ENCODE measurements at regions of chr9 and their contacts with region 1.

Region 1: DNA sequence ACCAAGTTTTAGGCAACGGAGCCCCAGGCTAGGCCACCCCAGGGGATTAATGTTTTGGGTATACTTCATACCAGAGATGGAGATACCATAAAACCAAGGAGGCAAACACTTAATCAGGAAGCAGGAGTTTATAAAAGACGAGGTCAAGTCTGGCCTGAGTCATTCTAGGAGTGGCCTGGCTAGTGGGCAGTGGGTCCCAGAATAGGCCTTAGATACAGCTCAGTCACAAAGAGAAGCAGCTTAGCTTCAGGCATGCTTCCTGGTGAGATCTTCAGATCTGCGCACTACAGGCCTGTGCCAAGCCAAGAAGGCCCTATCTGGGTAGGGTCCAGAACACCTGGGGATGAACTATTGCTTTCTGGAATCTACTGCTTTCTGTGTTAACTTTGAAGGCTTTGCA is 20.6 kb upstream of the NR5A1 start:
- ATAC-seq: peak in 3 of 8 experiments; percentile 38 to 64 (median 49)
- H3K4me3 ChIP-seq: no peak overlapping the region
- H3K27ac ChIP-seq: no peak overlapping the region
- H3K4me1 ChIP-seq: no peaks in the 10 kb centered on the region

Region 2: DNA sequence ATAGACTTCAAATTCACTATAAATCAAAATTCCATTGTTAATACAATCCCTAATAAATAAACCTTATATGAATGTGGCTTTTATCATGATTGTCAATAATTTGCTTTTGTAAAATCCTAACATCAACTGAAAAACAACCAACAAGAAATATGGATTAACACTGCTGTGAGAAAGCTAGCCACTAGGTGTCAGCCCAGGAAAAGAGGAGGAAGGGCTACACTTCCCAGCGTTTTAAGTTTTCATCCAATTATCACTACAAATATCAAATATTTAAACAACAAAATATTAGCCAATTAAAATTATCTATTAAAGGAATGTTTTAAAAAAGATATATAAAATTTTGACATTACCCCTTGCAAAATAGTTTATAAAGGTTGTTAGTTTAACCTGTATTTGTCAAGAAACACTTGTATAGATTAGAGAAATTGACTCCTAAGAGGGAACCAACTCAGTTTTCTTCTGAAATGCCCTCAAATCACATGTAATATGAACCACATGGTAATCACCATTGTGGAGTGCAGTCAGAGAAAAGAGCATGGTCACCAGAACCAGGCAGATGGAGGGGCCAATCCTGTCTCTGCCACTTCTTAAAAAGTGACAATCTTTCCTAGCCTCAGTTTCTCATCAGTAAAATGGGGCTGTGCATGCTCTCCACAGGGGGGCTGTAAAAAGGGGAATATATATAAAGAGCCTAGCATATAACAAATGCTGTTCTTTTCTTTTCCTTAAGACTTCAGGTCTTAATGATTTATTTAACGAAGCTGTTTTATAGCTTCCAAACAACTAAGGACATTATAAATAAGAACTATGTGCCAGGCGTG is 983.6 kb before region 1 on chr9:
- in situ Hi-C with region 1: loop called in 1 of 9 experiments (anchors 25 kb)
- ATAC-seq: peak in 3 of 8 experiments; percentile 23 to 41 (median 37)
- H3K4me3 ChIP-seq: no peak overlapping the region
- H3K27ac ChIP-seq: no peak overlapping the region
- H3K4me1 ChIP-seq: peaks cover 12 to 16% of the 10 kb centered on the region in 2 donors

Region 3: GRCh38 chr9:123637945-123638634 is 889.7 kb before region 1 on chr9:
- in situ Hi-C with region 1: no loop called
- ATAC-seq: peak in 2 of 8 experiments; percentile 13 to 46
- H3K4me3 ChIP-seq: no peak overlapping the region
- H3K27ac ChIP-seq: no peak overlapping the region
- H3K4me1 ChIP-seq: peaks cover 0 to 5% of the 10 kb centered on the region in 2 donors

Region 4: DNA sequence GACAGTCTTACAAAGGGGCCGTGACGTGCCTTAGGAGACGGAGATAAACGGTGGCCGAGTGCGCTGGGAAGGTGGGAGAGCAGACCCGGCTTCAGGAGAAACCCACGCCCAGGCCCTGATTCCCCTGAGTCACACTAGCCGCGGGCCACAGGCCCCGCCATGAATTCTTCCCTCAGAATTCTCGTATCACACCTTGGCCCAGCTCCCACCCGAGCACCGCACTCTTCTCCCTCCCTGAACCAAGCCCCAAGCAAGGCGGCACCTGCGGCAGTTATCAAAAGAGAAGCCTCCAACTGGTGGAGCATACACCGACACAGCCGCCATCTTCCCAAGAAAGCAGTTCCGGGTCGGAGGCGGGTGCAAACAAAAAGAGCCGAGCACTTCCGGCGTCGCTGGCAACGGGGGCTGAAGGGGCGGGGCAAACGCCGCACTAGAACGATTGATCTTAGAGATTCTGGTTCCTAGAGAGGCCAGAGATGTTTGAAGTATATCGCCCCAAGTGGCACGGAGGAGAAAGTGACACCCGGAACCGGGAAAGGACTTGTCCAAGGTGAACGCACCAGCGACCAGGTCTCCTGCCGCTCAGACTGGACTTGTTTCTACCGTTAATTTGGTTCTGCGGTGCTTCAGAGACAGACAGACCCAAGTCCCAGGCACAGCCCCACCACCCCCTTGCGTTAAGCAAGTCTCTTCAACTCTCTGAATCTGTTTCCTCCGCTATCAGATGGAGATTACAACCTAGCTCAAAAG is 112.5 kb before region 1 on chr9 and contains the start of gene PSMB7:
- in situ Hi-C with region 1: loop called in 5 of 9 experiments (anchors 10 to 25 kb)
- ATAC-seq: peak; percentile 85 to 94 (median 90)
- H3K4me3 ChIP-seq: peak within 1 kb of the TSS; percentile 56 to 98 (median 67)
- H3K27ac ChIP-seq: peak within 1 kb of the TSS; percentile 80 to 85
- H3K4me1 ChIP-seq: peaks cover 4 to 6% of the 10 kb centered on the region in 2 donors
- total RNA-seq, gene PSMB7: 169 to 289 (median 207) TPM

Region 5: DNA sequence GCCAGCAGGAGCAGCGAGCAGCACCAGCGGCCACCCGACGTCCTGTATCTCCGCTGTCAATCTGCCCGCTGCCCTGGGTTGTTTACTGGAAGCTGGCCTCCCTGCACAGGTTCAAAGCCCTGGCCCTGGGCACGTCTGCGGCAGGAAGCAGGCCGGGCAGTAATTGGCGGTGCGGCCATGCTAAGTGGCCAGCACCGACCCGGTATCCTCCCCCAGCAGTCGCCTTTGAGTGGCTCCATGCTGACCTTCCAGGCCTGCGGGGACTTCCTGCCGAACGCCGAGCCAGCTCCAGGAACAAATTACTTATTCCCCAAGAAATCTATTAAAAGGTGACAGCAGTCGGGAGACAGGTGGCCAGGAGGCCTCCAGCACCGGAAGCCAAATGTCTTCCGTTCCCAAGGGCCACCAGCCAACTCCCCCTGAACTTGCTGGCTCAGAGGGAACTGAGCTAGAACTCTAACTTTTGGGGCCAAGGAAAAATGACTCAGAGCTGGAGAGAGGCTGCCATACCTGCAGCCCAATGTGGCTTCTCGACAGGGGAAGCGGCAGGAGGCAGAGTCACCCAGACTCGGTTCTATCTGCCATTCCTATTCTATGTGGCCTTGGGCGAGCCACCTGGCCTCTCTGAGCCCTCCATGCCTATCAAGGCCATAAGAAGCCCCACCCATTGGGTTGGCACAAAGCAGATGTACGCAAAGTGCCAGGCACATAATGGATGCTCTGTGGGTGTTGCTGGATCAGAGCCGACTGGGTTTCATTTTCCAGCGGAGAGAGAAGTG is 98.8 kb before region 1 on chr9:
- in situ Hi-C with region 1: loop called in 5 of 9 experiments (anchors 10 to 25 kb)
- ATAC-seq: no peak
- H3K4me3 ChIP-seq: no peak overlapping the region
- H3K27ac ChIP-seq: no peak overlapping the region
- H3K4me1 ChIP-seq: peaks cover 3 to 14% of the 10 kb centered on the region in 2 donors

Region 6: DNA sequence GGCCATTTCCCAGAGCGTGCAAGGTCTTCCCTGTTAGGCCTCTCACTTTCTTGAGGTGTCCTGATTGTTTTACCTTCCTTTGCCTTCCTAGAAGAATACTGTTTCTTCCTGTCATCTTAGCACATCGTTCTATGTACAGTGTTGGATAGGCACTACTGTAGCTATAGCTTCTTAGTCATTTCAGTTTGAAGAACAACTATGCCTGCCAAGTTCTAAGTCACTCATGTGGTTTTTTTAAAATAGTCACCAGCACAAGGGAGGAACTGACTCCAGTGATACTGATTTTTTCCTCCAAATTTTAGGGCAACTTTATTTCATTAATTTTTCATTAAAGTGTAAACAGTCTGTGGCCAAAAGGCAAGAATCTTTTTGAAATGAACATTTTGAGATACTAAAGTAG is 101.8 kb after region 1 on chr9:
- in situ Hi-C with region 1: no loop called
- ATAC-seq: no peak
- H3K4me3 ChIP-seq: no peak overlapping the region
- H3K27ac ChIP-seq: no peak overlapping the region
- H3K4me1 ChIP-seq: no peaks in the 10 kb centered on the region